Heart right ventricle (tissue), 16 donors: ENCODE measurements at regions of chr2 and their contacts with region 1.

Region 1: DNA sequence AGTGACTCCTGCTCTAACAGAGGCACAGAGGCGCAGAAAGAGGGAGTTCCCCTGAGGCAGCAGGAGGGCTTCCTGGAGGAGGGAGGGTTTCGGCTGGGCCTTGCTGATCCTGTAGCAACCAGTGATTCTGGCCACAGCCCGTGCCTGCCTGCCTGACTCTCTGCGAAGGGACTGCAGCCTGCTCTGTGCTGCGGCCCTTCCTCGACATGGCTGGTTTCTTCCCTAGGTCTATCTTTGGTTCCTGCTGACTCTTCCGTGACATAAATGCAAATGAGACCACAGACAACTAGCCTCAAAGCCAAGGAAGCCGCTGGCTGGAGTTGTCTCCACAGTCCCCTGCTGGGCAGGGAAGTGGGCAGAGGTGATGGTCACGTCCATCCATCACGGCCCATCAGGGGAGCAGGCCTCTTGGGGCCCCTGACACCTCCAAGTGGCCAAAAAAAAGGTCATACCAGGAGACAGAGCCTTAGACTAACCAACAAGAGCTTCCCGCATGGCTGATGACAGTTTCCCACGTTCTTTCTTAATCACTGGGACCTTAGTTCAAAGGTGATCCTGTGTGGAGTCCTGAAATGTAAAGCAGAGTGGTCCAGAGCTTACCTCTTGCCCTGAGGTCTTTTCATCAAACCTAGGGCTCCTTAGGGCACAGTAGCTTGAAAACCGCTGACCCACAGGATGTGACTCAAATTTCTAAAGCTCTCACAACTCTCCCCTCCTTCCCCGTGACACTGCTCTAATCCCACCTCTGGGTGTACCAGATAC is 55.3 kb downstream of the HS1BP3 start:
- DNase-seq: peak in 1 of 2 donors; percentile 17
- ATAC-seq: peak in 1 of 8 donors; percentile 18
- H3K4me3 ChIP-seq: no peak overlapping the region
- H3K27ac ChIP-seq: peak overlapping the region; percentile 68 to 88 (median 83)
- H3K4me1 ChIP-seq: peaks cover 44 to 94% (median 76%) of the 10 kb centered on the region in 9 donors
- H3K27me3 ChIP-seq: no peaks in the 10 kb centered on the region
- CTCF ChIP-seq: no peak

Region 2: DNA sequence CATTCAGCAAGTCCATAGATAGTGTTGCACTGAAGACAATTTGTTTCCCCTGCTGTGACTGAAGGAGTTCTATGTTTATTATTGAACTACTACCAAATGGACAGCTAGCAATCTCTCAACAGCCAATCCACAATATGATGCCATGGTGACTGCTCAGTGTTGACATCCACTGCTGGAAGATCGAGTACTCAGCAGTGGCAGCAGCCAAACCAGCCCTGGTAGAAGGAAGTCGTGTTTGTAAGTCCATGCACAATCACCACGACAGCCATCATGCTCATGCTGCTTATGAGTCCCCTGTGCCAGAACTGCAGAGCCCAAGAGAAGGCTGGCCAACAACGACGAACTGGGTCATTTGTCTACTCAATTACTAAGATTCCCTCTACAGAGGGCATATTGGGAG is 1303.6 kb before region 1 on chr2:
- intact Hi-C with region 1: no loop called
- DNase-seq: no peak
- ATAC-seq: peak in 5 of 8 donors; percentile 21 to 94 (median 67)
- H3K4me3 ChIP-seq: no peak overlapping the region
- H3K27ac ChIP-seq: no peak overlapping the region
- H3K4me1 ChIP-seq: peaks cover 0 to 7% (median 0%) of the 10 kb centered on the region in 9 donors
- H3K27me3 ChIP-seq: no peaks in the 10 kb centered on the region
- CTCF ChIP-seq: no peak

Region 3: GRCh38 chr2:20578895-20579825 is 16.5 kb before region 1 on chr2:
- intact Hi-C with region 1: loop called in 1 of 10 experiments (anchors 2 kb)
- DNase-seq: peak; percentile 73 to 92
- ATAC-seq: peak; percentile 85 to 94 (median 91)
- H3K4me3 ChIP-seq: no peak overlapping the region
- H3K27ac ChIP-seq: peak overlapping the region; percentile 57 to 95 (median 82)
- H3K4me1 ChIP-seq: peaks cover 28 to 83% (median 70%) of the 10 kb centered on the region in 9 donors
- H3K27me3 ChIP-seq: no peaks in the 10 kb centered on the region
- CTCF ChIP-seq: no peak

Region 4: GRCh38 chr2:20617892-20618467 is 22.4 kb after region 1 on chr2:
- intact Hi-C with region 1: loop called in 2 of 10 experiments (anchors 1 to 2 kb)
- DNase-seq: peak; percentile 96 to 98
- ATAC-seq: peak; percentile 77 to 90 (median 84)
- H3K4me3 ChIP-seq: peak overlapping the region in 1 of 10 donors; percentile 1
- H3K27ac ChIP-seq: peak overlapping the region; percentile 87 to 99 (median 96)
- H3K4me1 ChIP-seq: peaks cover 63 to 100% (median 92%) of the 10 kb centered on the region in 9 donors
- H3K27me3 ChIP-seq: no peaks in the 10 kb centered on the region
- CTCF ChIP-seq: peak; percentile 35 to 73 (median 60)

Region 5: GRCh38 chr2:20635675-20636584 is 40.3 kb after region 1 on chr2:
- intact Hi-C with region 1: loop called in 5 of 10 experiments (anchors 2 to 5 kb)
- DNase-seq: peak; percentile 88 to 91
- ATAC-seq: peak; percentile 80 to 93 (median 90)
- H3K4me3 ChIP-seq: peak overlapping the region in 1 of 10 donors; percentile 11
- H3K27ac ChIP-seq: peak overlapping the region; percentile 32 to 87 (median 74)
- H3K4me1 ChIP-seq: peaks cover 32 to 72% (median 49%) of the 10 kb centered on the region in 9 donors
- H3K27me3 ChIP-seq: no peaks in the 10 kb centered on the region
- CTCF ChIP-seq: peak; percentile 88 to 98 (median 94)